Heart left ventricle (tissue), 16 donors: ENCODE measurements at regions of chr3 and their contacts with region 1.

Region 1: DNA sequence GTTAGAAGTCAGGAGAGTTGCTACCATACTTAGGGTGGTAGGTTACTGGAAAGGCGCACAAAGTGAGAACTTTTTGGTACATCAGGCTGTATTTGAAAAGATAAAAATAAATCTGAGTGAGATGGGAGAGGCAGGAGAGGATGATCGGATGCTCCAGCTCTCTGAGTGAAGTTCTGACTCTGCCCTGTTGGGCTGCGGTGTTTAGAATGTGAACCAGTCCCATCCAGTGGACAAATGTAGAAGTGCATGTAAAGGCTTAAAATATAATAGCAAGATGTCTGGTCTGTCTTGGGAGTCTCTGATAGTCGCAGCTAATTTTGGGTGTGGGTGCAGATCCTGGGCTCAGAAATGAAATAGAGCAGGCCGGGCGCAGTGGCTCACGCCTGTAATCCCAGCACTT is 30.4 kb downstream of the ACKR2 start:
- DNase-seq: peak in 1 of 5 donors; percentile 46
- ATAC-seq: peak; percentile 78 to 93 (median 87)
- H3K4me3 ChIP-seq: peak overlapping the region in 2 of 12 donors; percentile 2 to 37
- H3K27ac ChIP-seq: no peak overlapping the region
- H3K4me1 ChIP-seq: peaks cover 0 to 22% (median 7%) of the 10 kb centered on the region in 12 donors
- H3K27me3 ChIP-seq: no peaks in the 10 kb centered on the region
- CTCF ChIP-seq: peak; percentile 52 to 78 (median 72)
- POLR2A ChIP-seq: no peak

Region 2: GRCh38 chr3:42780892-42781700 is 58.5 kb before region 1 on chr3:
- intact Hi-C with region 1: loop called in 8 of 10 experiments (anchors 2 to 5 kb)
- DNase-seq: no peak
- ATAC-seq: peak in 3 of 4 donors; percentile 59 to 72 (median 70)
- H3K4me3 ChIP-seq: no peak overlapping the region
- H3K27ac ChIP-seq: peak overlapping the region in 2 of 12 donors; percentile 12 to 63
- H3K4me1 ChIP-seq: peaks cover 0 to 11% (median 3%) of the 10 kb centered on the region in 12 donors
- H3K27me3 ChIP-seq: no peaks in the 10 kb centered on the region
- CTCF ChIP-seq: peak; percentile 69 to 84 (median 78)
- POLR2A ChIP-seq: peak in 1 of 2 donors; percentile 13

Region 3: GRCh38 chr3:42871592-42872196 is 32.1 kb after region 1 on chr3:
- intact Hi-C with region 1: loop called in 2 of 10 experiments (anchors 2 to 5 kb)
- DNase-seq: peak in 4 of 5 donors; percentile 32 to 52 (median 35)
- ATAC-seq: peak; percentile 36 to 65 (median 61)
- H3K4me3 ChIP-seq: no peak overlapping the region
- H3K27ac ChIP-seq: peak overlapping the region in 3 of 12 donors; percentile 19 to 53 (median 48)
- H3K4me1 ChIP-seq: peaks cover 0 to 21% (median 7%) of the 10 kb centered on the region in 12 donors
- H3K27me3 ChIP-seq: no peaks in the 10 kb centered on the region
- CTCF ChIP-seq: no peak
- POLR2A ChIP-seq: no peak